ENCODE measurements at regions of chr21 and their contacts with region 1.

Region 1: DNA sequence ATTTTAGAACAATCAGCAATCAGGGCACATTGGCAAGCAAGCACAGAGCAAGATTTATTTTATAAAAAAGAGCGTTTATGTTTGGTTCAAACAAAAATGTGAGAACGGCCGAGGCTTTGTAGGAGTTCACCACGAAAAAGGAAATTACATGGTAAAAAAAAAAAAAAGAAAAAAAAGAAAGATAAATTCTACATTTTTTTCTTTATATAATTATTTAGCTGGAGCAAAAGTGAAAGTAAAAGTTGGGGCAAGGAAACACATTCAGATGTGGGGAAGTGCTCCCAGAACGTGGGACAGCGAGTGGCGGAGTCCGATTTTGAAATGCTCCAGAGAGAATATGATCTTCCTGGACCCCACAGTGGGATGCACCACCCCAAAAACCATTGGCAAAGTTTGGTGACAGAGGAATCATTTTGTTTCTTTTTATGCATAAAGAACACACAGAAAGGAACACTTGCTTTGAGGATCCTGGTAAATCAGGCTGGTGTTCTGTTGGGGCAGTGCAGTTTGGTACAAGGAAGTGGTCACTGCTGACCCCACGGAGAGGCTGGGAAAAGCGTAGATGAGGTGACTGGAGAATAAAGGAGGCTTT is 16.3 kb upstream of the ATP5PO start:
- DNase-seq: no peak
- H3K4me3 ChIP-seq: peak overlapping the region; percentile 44 to 63 (median 45)
- H3K27ac ChIP-seq: peak overlapping the region; percentile 23 to 48
- H3K4me1 ChIP-seq: peaks cover 0 to 6% of the 10 kb centered on the region in 2 donors
- H3K27me3 ChIP-seq: no peaks in the 10 kb centered on the region
- CTCF ChIP-seq: no peak
- POLR2A ChIP-seq: no peak

Region 2: DNA sequence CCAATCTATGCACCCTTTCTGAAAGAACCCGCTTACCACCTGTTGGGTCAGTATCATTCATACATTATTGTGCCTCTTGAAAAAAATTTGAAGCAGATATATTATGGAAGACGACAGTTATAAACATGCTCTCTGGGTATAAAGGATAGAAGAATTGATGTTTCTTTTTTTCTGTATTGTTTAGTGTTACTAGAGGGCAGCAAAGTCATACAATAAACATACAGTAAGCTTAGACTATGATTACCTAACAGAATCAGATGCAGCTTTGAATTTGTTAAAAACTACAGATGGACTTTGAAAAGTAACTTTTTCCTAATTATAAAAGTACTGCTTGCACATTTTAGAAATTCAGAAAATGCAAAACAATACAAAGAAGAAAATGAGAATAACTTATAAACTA is 1149.2 kb before region 1 on chr21:
- intact Hi-C with region 1: no loop called
- DNase-seq: no peak
- H3K4me3 ChIP-seq: no peak overlapping the region
- H3K27ac ChIP-seq: no peak overlapping the region
- H3K4me1 ChIP-seq: no peaks in the 10 kb centered on the region
- H3K27me3 ChIP-seq: no peaks in the 10 kb centered on the region
- CTCF ChIP-seq: no peak
- POLR2A ChIP-seq: no peak

Region 3: DNA sequence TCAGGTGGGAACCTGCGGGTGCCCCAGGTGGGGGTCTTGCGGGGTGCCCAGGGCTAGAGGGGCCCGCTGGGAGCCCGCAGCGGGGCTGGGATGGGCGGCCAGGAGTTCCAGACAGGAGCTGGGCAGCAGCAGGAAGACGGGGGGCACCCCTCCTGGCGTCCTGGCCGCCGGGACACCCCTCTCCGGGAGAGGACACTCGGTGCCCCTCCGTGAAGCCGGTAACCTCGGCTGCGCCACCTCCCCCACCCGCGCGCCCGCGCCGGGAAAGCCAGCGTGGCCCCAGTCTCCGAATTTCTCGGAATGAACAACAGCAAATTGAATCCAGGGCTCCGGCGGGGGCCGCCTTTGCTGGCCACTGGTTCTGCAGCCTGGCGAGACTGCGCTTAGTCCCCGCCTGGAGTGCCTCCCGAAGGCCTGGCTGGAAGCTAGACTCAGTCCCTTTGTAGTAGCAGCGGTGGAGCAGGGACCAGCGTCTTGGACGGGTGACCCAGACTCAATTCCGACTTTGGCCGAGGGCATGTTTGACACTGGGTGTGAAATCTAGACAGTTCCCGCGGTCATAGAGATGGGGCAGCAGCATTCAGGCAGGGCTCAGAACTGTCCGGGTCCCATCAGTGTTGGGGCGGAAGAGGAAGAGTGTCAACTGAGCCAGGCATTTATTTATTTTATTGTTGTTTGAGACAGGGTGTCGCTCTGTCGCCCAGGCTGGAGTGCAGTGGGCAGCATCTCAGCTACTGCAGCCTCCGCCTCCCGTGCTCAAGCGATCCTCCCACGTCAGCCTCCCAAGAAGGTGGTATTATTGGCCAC is 527.9 kb before region 1 on chr21:
- intact Hi-C with region 1: no loop called
- DNase-seq: peak; percentile 29 to 68
- H3K4me3 ChIP-seq: peak overlapping the region; percentile 91 to 99 (median 97)
- H3K27ac ChIP-seq: peak overlapping the region; percentile 99 to 100
- H3K4me1 ChIP-seq: peaks cover 0 to 12% of the 10 kb centered on the region in 2 donors
- H3K27me3 ChIP-seq: no peaks in the 10 kb centered on the region
- CTCF ChIP-seq: no peak
- POLR2A ChIP-seq: no peak

Region 4: DNA sequence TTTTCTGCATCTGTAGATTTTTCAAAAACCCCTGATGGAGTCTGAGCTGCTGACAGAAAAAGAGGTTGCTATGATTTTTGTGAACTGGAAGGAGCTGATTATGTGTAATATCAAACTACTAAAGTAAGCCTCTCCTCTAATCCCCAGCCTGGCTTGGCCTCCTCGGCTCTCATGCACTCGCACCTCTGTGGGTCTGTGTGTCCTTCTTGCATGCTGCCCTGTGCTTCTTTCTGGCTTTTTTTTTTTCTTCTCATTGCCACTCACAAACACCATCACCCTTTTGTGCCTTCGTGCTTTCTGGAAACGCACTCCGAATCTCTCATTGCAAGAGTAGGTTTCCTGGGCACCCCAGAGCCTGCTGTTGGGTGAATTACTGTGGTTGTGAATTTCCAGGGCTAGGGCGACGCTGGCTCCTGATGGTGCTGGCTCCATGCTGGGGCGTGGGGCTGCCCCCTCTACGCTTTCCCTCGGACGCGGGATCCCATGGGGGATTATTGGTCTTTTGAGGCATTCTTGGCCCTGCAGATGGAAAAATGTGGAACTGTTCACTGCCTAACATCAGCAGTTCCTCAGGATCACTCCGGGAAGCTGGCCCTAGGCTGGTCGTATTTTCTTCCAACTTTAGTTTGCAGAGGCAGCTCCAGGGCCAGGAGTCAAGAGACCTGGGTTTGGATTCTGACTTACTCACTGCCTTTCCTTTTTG is 73.1 kb before region 1 on chr21:
- intact Hi-C with region 1: no loop called
- DNase-seq: no peak
- H3K4me3 ChIP-seq: no peak overlapping the region
- H3K27ac ChIP-seq: no peak overlapping the region
- H3K4me1 ChIP-seq: no peaks in the 10 kb centered on the region
- H3K27me3 ChIP-seq: no peaks in the 10 kb centered on the region
- CTCF ChIP-seq: no peak
- POLR2A ChIP-seq: no peak

Region 5: GRCh38 chr21:33947451-33948095 is 15.7 kb after region 1 on chr21:
- intact Hi-C with region 1: no loop called
- DNase-seq: peak; percentile 85 to 93
- H3K4me3 ChIP-seq: peak overlapping the region in 2 of 3 donors; percentile 42 to 45
- H3K27ac ChIP-seq: peak overlapping the region; percentile 92
- H3K4me1 ChIP-seq: peaks cover 2 to 9% of the 10 kb centered on the region in 2 donors
- H3K27me3 ChIP-seq: no peaks in the 10 kb centered on the region
- CTCF ChIP-seq: no peak
- POLR2A ChIP-seq: no peak

Region 6: GRCh38 chr21:34091607-34092006 is 159.7 kb after region 1 on chr21:
- intact Hi-C with region 1: loop called (anchors 10 kb)
- DNase-seq: no peak
- H3K4me3 ChIP-seq: no peak overlapping the region
- H3K27ac ChIP-seq: no peak overlapping the region
- H3K4me1 ChIP-seq: no peaks in the 10 kb centered on the region
- H3K27me3 ChIP-seq: no peaks in the 10 kb centered on the region
- CTCF ChIP-seq: peak in 2 of 3 donors; percentile 11 to 16
- POLR2A ChIP-seq: no peak

Measured in breast epithelium (tissue), 4 donors.